Ovary (tissue), 10 donors: ENCODE measurements at regions of chr1 and their contacts with region 1.

Region 1: GRCh38 chr1:79777481-79778219 is 771.1 kb upstream of the ADGRL4 start:
- DNase-seq: no peak
- H3K4me3 ChIP-seq: no peak overlapping the region
- H3K27ac ChIP-seq: no peak overlapping the region
- H3K4me1 ChIP-seq: no peaks in the 10 kb centered on the region
- H3K27me3 ChIP-seq: no peaks in the 10 kb centered on the region
- CTCF ChIP-seq: no peak
- EP300 ChIP-seq: no peak
- POLR2A ChIP-seq: no peak

Region 2: GRCh38 chr1:79760531-79760930 is 17.1 kb before region 1 on chr1:
- intact Hi-C with region 1: loop called in 1 of 4 experiments (anchors 1 kb)
- DNase-seq: no peak
- H3K4me3 ChIP-seq: no peak overlapping the region
- H3K27ac ChIP-seq: no peak overlapping the region
- H3K4me1 ChIP-seq: no peaks in the 10 kb centered on the region
- H3K27me3 ChIP-seq: no peaks in the 10 kb centered on the region
- CTCF ChIP-seq: no peak
- EP300 ChIP-seq: no peak
- POLR2A ChIP-seq: no peak

Region 3: GRCh38 chr1:81208441-81208840 is 1430.8 kb after region 1 on chr1:
- intact Hi-C with region 1: no loop called
- DNase-seq: peak in 1 of 5 donors; percentile 10
- H3K4me3 ChIP-seq: no peak overlapping the region
- H3K27ac ChIP-seq: no peak overlapping the region
- H3K4me1 ChIP-seq: no peaks in the 10 kb centered on the region
- H3K27me3 ChIP-seq: no peaks in the 10 kb centered on the region
- CTCF ChIP-seq: no peak
- EP300 ChIP-seq: no peak
- POLR2A ChIP-seq: no peak